Heart left ventricle (tissue), 16 donors: ENCODE measurements at regions of chr1 and their contacts with region 1.

Region 1: GRCh38 chr1:56578963-56579875 is at the start of gene PLPP3:
- DNase-seq: peak; percentile 87 to 93 (median 91)
- ATAC-seq: peak; percentile 82 to 93 (median 88)
- H3K4me3 ChIP-seq: peak within 1 kb of the TSS; percentile 82 to 99 (median 94)
- H3K27ac ChIP-seq: peak within 1 kb of the TSS; percentile 94 to 99 (median 98)
- H3K4me1 ChIP-seq: peaks cover 0 to 32% (median 11%) of the 10 kb centered on the region in 12 donors
- H3K27me3 ChIP-seq: no peaks in the 10 kb centered on the region
- CTCF ChIP-seq: peak; percentile 27 to 76 (median 52)
- POLR2A ChIP-seq: peak in 1 of 2 donors; percentile 94
- total RNA-seq, gene PLPP3: 75.8 to 221 (median 97.8) TPM

Region 2: GRCh38 chr1:55124470-55124869 is 1454.7 kb before region 1 on chr1:
- intact Hi-C with region 1: no loop called
- DNase-seq: no peak
- ATAC-seq: no peak
- H3K4me3 ChIP-seq: no peak overlapping the region
- H3K27ac ChIP-seq: no peak overlapping the region
- H3K4me1 ChIP-seq: peaks cover 0 to 10% (median 0%) of the 10 kb centered on the region in 12 donors
- H3K27me3 ChIP-seq: no peaks in the 10 kb centered on the region
- CTCF ChIP-seq: no peak
- POLR2A ChIP-seq: no peak

Region 3: GRCh38 chr1:56064705-56065104 is 514.5 kb before region 1 on chr1:
- intact Hi-C with region 1: loop called in 1 of 10 experiments (anchors 10 kb)
- DNase-seq: no peak
- ATAC-seq: peak in 3 of 4 donors; percentile 36 to 68 (median 65)
- H3K4me3 ChIP-seq: no peak overlapping the region
- H3K27ac ChIP-seq: no peak overlapping the region
- H3K4me1 ChIP-seq: peaks cover 0 to 8% (median 0%) of the 10 kb centered on the region in 12 donors
- H3K27me3 ChIP-seq: no peaks in the 10 kb centered on the region
- CTCF ChIP-seq: no peak
- POLR2A ChIP-seq: no peak

Region 4: DNA sequence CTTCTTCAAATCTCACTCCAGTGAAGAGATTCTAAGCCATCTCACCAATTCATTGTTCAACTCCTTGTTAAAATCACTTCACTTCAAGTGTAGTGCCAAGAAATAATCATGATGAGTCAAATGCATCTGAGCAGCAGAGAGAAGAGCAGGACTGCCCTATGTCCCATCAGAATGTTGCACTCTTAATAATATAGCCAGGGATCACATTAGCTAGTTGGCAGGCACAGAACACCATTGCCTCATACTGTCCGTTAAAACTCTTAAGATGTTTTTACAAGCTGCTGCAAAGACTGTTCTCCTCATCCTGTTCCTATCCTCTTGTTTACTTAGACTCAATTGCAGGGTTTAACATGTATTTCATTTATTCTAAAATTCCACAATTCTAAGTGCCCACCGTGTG is 432.8 kb before region 1 on chr1:
- intact Hi-C with region 1: loop called in 1 of 10 experiments (anchors 5 kb)
- DNase-seq: no peak
- ATAC-seq: peak in 3 of 4 donors; percentile 42 to 63 (median 42)
- H3K4me3 ChIP-seq: no peak overlapping the region
- H3K27ac ChIP-seq: peak overlapping the region in 2 of 12 donors; percentile 22 to 46
- H3K4me1 ChIP-seq: peaks cover 0 to 32% (median 4%) of the 10 kb centered on the region in 12 donors
- H3K27me3 ChIP-seq: no peaks in the 10 kb centered on the region
- CTCF ChIP-seq: no peak
- POLR2A ChIP-seq: no peak

Region 5: DNA sequence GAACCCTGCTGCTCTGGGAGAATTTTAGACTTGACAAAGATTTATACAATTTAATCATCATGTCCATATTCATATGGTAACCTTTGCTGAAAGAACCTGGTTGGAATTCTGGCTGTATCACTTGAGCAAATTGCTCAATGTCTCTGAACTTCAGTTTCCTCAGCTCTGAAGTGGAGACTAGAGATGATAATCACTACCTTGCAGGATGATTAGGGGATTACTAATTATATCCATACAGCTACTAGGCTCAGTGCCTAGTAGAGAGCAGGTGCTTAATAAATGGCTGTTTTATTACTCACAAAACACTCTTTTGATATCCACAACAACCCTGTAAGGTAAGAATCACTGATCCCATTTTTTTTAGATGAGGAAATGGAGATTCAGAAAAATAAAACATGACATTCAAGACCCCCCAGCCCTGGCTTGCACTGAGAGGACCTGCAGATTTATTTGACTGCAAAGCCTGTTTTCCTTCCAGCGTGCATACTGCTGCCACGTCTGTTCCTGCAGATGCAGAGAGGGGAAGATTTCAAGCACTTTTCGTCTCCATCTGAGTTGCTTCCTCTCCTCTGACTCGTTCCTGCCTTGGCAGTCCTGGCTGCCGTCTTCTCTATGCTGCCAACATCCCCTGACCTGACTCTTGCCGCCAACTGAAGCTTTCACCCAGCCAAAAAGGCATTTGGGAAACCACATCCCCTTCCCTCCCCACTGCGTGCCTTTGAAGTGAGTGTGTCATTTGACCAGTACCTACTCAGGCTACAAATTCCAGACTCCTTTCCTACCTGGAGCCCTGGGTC is 202.8 kb before region 1 on chr1:
- intact Hi-C with region 1: loop called in 4 of 10 experiments (anchors 5 to 10 kb)
- DNase-seq: peak; percentile 37 to 66 (median 60)
- ATAC-seq: peak in 3 of 4 donors; percentile 39 to 64 (median 49)
- H3K4me3 ChIP-seq: no peak overlapping the region
- H3K27ac ChIP-seq: peak overlapping the region; percentile 18 to 78 (median 66)
- H3K4me1 ChIP-seq: peaks cover 0 to 63% (median 47%) of the 10 kb centered on the region in 12 donors
- H3K27me3 ChIP-seq: no peaks in the 10 kb centered on the region
- CTCF ChIP-seq: no peak
- POLR2A ChIP-seq: no peak

Region 6: DNA sequence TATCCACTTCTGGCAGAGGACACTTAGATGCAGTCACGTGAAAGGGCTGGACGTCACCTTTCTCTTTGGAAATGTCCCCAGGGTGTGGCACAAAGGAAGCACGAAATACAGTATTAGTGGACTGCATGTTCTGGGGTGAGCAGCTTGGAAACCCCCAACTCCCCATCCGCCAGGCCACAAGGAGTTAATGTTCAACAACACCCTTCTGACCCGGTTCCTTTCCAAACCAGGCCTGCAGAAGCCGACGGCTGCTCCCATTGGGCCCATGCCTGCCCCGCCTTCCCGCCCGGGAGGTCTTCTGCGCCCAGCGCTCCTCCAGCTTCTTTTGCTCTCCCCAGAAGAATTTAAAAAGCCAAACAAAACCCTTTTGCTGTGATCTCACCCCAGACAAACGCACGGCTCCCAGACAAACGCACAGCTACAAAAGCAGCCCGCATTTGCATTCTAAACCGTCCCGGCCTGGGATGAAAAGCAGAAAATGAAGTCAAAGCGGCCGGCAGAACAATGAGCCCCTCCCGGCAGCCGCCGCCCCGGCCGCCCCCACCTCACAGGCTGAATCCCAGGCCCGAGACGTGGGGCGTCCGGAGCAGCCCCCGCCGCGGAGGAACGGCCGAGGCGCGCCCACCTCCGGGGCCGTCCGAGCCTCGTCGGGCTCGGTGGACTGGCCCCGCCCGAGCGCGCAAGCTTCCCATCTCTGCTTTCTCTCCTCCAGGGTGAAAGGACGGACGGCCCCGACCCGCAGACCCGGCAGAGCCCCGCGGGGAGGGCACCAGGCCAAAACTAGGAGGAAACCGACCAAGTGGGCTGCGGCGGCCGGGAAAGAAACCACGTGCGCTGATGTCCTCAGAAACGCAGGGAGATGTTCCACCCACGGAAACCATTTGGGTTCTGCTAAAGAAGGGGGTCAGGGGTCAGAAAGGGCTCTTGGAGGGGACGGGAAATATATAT is 101.8 kb before region 1 on chr1:
- intact Hi-C with region 1: loop called in 4 of 10 experiments (anchors 2 to 10 kb)
- DNase-seq: peak; percentile 69 to 85 (median 79)
- ATAC-seq: peak; percentile 84 to 94 (median 90)
- H3K4me3 ChIP-seq: peak overlapping the region; percentile 50 to 89 (median 68)
- H3K27ac ChIP-seq: peak overlapping the region; percentile 88 to 96 (median 92)
- H3K4me1 ChIP-seq: peaks cover 0 to 23% (median 10%) of the 10 kb centered on the region in 12 donors
- H3K27me3 ChIP-seq: peaks cover 0 to 4% (median 0%) of the 10 kb centered on the region in 9 donors
- CTCF ChIP-seq: no peak
- POLR2A ChIP-seq: peak in 1 of 2 donors; percentile 20

Region 7: DNA sequence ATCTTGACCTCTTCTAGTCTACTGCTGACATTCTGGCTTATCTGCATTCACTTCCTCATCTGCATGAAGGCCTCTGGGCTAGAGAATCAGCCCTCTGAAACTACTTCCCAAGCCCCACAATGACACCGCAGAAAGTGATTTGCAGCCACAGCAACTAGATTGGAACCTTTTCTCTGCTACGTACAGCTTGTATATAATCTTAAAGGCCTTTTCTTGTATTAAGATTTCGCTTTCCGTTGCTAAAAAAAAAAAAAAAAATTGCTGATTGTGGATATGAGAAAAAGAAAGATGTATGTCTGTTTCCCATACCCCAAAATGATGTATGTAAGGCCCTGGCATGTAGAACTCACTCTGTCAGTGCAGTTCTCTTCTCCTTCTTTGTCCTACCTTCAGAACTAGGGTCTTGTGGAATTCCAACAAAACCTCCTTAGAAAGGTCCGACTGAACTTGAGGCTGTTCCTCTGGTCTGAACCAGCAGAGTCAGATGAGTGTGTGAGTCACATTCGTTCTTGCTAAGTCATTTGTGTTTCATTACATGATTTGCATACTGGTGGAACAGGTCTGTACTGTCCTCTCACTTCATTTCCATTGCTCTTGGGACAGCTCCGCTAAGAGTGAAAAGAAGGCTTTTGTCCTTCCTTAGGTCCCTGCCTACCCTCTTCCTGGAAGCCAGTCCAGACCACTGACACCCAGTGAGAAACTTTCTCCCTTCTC is 62.5 kb before region 1 on chr1:
- intact Hi-C with region 1: loop called in 4 of 10 experiments (anchors 2 to 10 kb)
- DNase-seq: no peak
- ATAC-seq: peak in 3 of 4 donors; percentile 33 to 56 (median 46)
- H3K4me3 ChIP-seq: no peak overlapping the region
- H3K27ac ChIP-seq: peak overlapping the region in 11 of 12 donors; percentile 0 to 84 (median 46)
- H3K4me1 ChIP-seq: peaks cover 11 to 98% (median 58%) of the 10 kb centered on the region in 12 donors
- H3K27me3 ChIP-seq: no peaks in the 10 kb centered on the region
- CTCF ChIP-seq: no peak
- POLR2A ChIP-seq: no peak

Region 8: GRCh38 chr1:56627636-56628039 is 48.4 kb after region 1 on chr1:
- intact Hi-C with region 1: no loop called
- DNase-seq: no peak
- ATAC-seq: no peak
- H3K4me3 ChIP-seq: no peak overlapping the region
- H3K27ac ChIP-seq: no peak overlapping the region
- H3K4me1 ChIP-seq: no peaks in the 10 kb centered on the region
- H3K27me3 ChIP-seq: peaks cover 0 to 4% (median 0%) of the 10 kb centered on the region in 9 donors
- CTCF ChIP-seq: no peak
- POLR2A ChIP-seq: no peak

Region 9: DNA sequence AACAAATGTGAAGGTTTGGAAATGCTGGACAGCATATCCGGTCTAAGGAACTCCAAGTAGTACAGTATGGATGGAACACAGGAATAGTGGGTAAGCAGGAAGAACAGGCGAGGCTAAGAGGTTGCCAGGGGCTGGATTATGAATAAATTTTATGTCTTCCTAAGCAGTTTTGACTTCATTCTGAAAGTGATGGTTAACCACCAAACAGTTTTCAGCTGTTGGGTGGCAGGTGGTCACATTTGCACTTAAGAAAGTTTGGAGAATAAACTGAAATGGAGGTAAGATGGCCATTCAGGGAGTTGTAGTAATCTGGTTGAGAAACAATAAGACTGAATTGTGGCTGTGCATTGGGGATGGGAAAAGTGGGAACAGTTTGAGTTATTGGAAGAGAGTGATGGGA is 149.7 kb after region 1 on chr1:
- intact Hi-C with region 1: no loop called
- DNase-seq: no peak
- ATAC-seq: no peak
- H3K4me3 ChIP-seq: no peak overlapping the region
- H3K27ac ChIP-seq: no peak overlapping the region
- H3K4me1 ChIP-seq: no peaks in the 10 kb centered on the region
- H3K27me3 ChIP-seq: no peaks in the 10 kb centered on the region
- CTCF ChIP-seq: no peak
- POLR2A ChIP-seq: no peak